H1 (cell line): ENCODE measurements at regions of chr19 and their contacts with region 1.

Region 1: DNA sequence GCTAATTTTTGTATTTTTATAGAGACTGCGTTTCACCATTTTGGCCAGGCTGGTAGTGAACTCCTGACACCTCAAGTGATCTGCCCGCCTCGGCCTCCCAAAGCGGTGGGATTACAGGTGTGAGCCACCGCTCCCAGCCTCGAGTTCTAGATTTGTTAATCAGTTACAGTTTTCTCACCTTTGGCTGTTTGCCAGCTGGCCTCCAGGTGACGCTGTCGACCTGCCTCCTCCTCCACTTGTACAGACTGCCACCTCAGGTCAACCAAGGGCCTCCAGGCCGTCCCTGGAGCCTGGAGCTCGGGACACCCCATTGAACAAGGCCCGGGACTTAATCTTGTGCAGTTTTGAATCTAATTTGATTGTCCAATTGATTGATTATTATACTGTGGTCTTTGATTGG is 45.5 kb downstream of the IER2 start:
- DNase-seq: peak; percentile 47 to 86
- H3K4me3 ChIP-seq: no peak overlapping the region
- H3K27ac ChIP-seq: no peak overlapping the region
- H3K4me1 ChIP-seq: no peaks in the 10 kb centered on the region; a peak in 2 of 7 replicates
- H3K27me3 ChIP-seq: no peaks in the 10 kb centered on the region
- CTCF ChIP-seq: peak; percentile 94 to 99 (median 97)
- EP300 ChIP-seq: no peak
- POLR2A ChIP-seq: no peak
- RAD21 ChIP-seq: peak; percentile 92 to 93

Region 2: GRCh38 chr19:13155472-13156359 is 40.0 kb before region 1 on chr19:
- CTCF ChIA-PET with region 1: interaction called, 34 read pairs
- POLR2A ChIA-PET with region 1: interaction called, 16 read pairs
- DNase-seq: peak in 1 of 2 experiments; percentile 89
- H3K4me3 ChIP-seq: peak overlapping the region; percentile 90 to 99 (median 92)
- H3K27ac ChIP-seq: peak overlapping the region; percentile 85
- H3K4me1 ChIP-seq: peaks cover 0 to 8% (median 6%) of the 10 kb centered on the region in 4 experiments; a peak in 6 of 7 replicates
- H3K27me3 ChIP-seq: no peaks in the 10 kb centered on the region; a peak in 1 of 7 replicates
- CTCF ChIP-seq: no peak
- EP300 ChIP-seq: 0 out of 3 replicates have a peak, but pooled peaks of 1 of the 2 experiments have one; percentile 18
- POLR2A ChIP-seq: peak; percentile 12 to 63
- RAD21 ChIP-seq: no peak; a peak in 1 of 4 replicates

Region 3: DNA sequence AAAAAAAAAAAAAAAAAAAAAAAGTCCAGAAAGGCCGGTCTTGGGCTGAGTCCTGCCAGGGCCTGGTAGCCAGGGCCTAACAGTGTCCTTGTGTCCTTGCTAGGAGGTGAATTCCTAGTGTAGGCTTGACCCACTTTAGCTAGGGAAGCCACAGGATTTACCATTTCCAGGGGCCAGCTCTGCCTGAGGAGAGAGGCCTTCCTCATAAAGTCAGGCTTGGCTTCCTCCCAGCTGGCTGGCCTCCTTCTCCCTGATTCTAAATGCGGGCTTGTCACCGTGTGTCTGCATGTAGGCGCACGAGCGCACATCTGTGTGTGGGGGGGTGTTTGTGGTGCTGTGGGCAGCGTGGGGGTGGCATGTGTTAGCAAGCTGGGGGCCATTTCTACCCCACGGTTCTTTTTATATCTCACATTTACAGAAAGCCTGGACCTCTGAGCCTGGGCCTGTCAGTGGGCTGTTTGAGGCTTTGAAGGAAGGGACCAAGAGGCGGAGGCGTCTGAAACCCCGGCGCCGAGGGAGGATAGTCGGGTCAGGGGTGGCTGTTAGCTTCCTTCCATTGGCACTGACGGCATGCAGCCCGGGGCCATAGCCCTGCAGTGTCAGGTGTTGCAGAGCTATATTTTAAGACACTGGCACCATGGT is 13.8 kb before region 1 on chr19:
- CTCF ChIA-PET with region 1: interaction called, 42 read pairs
- POLR2A ChIA-PET with region 1: interaction called, 4 read pairs
- DNase-seq: no peak
- H3K4me3 ChIP-seq: no peak overlapping the region
- H3K27ac ChIP-seq: no peak overlapping the region
- H3K4me1 ChIP-seq: peaks cover 0 to 2% (median 1%) of the 10 kb centered on the region in 4 experiments; a peak in 2 of 7 replicates
- H3K27me3 ChIP-seq: no peaks in the 10 kb centered on the region
- CTCF ChIP-seq: no peak
- EP300 ChIP-seq: no peak
- POLR2A ChIP-seq: no peak
- RAD21 ChIP-seq: no peak

Region 4: GRCh38 chr19:13220847-13221246 is 25.2 kb after region 1 on chr19:
- CTCF ChIA-PET with region 1: interaction called, 89 read pairs
- POLR2A ChIA-PET with region 1: no interaction called
- DNase-seq: no peak
- H3K4me3 ChIP-seq: no peak overlapping the region
- H3K27ac ChIP-seq: no peak overlapping the region
- H3K4me1 ChIP-seq: peaks cover 0 to 4% (median 0%) of the 10 kb centered on the region in 4 experiments; a peak in 3 of 7 replicates
- H3K27me3 ChIP-seq: no peaks in the 10 kb centered on the region
- CTCF ChIP-seq: no peak
- EP300 ChIP-seq: no peak
- POLR2A ChIP-seq: no peak
- RAD21 ChIP-seq: no peak

Region 5: DNA sequence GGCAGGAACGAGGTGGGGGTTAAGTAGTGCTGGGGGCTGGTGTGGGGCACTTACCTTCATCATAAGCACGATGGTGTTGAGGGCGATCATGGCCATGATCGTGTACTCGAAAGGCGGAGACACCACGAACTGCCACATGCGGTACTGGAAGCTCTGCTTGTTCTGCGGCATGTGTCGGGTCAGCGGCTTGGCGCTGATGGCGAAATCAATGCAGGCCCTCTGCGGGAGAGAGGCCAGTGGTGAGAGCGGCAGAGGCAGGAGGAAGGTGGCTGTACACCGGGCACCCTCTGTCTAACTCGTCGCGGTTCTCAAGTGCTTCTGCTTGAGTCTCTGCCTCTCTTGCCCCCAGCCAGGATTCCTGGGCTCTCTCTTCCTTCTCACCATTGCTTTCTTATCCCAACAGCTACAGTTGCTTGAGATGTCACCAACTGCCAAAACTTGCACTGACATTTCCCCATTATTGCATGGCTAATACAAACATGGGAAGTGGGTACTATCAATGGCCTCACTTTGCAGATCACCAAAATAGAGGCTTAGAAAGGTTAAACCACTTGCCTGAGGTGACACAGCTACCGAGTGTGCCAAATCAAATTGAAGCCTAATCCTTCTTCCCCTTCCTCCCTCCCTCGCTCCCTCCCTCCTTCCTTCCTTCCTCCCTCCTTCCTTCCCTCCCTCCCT is 59.5 kb after region 1 on chr19:
- CTCF ChIA-PET with region 1: interaction called, 21 read pairs
- POLR2A ChIA-PET with region 1: no interaction called
- DNase-seq: no peak
- H3K4me3 ChIP-seq: no peak overlapping the region
- H3K27ac ChIP-seq: no peak overlapping the region
- H3K4me1 ChIP-seq: no peaks in the 10 kb centered on the region
- H3K27me3 ChIP-seq: no peaks in the 10 kb centered on the region
- CTCF ChIP-seq: no peak
- EP300 ChIP-seq: no peak
- POLR2A ChIP-seq: no peak
- RAD21 ChIP-seq: no peak